Activated naive CD4-positive, alpha-beta T cell treated with anti-CD3 and anti-CD28 coated beads for 36 hours (primary cell): ENCODE measurements at regions of chr5 and their contacts with region 1.

Region 1: GRCh38 chr5:112995764-112996618 is 19.4 kb downstream of the DCP2 start:
- DNase-seq: peak; percentile 85
- H3K4me3 Mint-ChIP-seq: no peak overlapping the region
- H3K27ac Mint-ChIP-seq: no peak overlapping the region
- H3K4me1 Mint-ChIP-seq: peaks cover 14% of the 10 kb centered on the region
- H3K27me3 Mint-ChIP-seq: no peaks in the 10 kb centered on the region

Region 2: DNA sequence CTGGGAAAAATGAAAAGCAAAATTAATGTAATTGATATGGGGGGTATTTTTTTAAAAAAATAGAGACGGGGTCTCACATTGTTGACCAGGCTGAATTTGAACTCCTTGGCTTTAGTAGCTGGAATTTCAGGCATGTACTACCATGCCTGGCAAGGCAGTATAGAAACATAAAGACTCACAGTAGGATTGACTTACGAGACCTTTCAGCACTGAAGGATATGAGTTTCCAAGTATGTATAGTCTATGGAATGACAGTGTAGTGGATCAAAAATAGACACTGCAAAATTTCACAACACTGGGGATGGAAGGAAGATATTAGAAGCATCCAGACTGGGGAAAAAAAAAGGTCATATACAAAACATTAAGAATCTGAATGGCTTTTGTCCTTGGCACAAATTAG is 12.6 kb before region 1 on chr5:
- CTCF ChIA-PET with region 1: interaction called, 48 read pairs
- intact Hi-C with region 1: no loop called
- DNase-seq: no peak
- H3K4me3 Mint-ChIP-seq: no peak overlapping the region
- H3K27ac Mint-ChIP-seq: no peak overlapping the region
- H3K4me1 Mint-ChIP-seq: peaks cover 53% of the 10 kb centered on the region
- H3K27me3 Mint-ChIP-seq: no peaks in the 10 kb centered on the region

Region 3: GRCh38 chr5:113022661-113023060 is 26.7 kb after region 1 on chr5:
- CTCF ChIA-PET with region 1: interaction called, 7 read pairs
- intact Hi-C with region 1: loop called (anchors 1 kb)
- DNase-seq: no peak
- H3K4me3 Mint-ChIP-seq: no peak overlapping the region
- H3K27ac Mint-ChIP-seq: peak overlapping the region; percentile 60
- H3K4me1 Mint-ChIP-seq: peaks cover 49% of the 10 kb centered on the region
- H3K27me3 Mint-ChIP-seq: no peaks in the 10 kb centered on the region

Region 4: DNA sequence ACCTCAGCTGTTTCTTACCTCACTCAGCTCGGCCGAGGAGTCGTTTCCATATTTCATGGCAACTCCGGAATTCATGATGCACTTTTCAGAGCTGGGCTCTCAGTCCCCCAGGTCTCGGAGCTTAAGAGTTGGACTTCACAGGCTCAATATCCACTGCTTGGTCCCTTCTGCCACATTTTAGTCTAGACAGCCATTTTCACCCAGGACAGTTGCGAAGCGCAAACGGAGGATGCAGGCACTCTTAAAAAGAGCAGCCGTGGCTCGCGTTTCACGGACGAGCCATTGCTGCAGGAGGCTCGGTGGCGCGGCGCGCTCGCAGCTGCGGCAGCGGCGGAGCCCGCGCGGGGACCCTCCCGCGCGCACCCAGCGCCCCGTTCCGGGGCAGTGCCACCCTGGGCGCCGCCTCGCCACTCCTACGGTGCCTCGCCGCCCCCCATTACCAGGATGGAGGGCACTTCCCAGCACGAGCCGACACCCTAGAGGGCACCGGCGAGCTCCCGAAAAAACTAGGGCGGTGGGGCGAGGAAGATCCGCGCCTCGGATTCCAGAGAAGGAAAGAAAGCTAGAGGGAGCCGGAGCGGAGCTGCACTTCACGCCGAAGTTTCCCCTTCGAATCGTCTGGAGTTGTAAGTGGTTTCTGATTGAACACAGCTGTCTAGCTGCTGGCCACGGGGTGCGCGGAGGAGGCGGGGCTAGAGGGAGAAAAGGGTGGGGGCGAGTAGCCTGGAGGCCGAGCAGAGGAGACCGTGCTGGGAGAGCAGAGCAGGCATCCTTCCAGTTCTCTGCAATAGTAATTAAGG is 298.5 kb after region 1 on chr5:
- CTCF ChIA-PET with region 1: no interaction called
- intact Hi-C with region 1: loop called (anchors 1 kb)
- DNase-seq: peak; percentile 79
- H3K4me3 Mint-ChIP-seq: peak overlapping the region; percentile 81
- H3K27ac Mint-ChIP-seq: no peak overlapping the region
- H3K4me1 Mint-ChIP-seq: peaks cover 14% of the 10 kb centered on the region
- H3K27me3 Mint-ChIP-seq: peaks cover 42% of the 10 kb centered on the region